Calu3 (cell line): ENCODE measurements at regions of chr2 and their contacts with region 1.

Region 1: GRCh38 chr2:160752496-160753330 is 259.1 kb upstream of the RBMS1 start:
- DNase-seq: peak; percentile 70
- H3K4me3 Mint-ChIP-seq: peak overlapping the region; percentile 22
- H3K27ac Mint-ChIP-seq: peak overlapping the region; percentile 82
- H3K4me1 Mint-ChIP-seq: peaks cover 50% of the 10 kb centered on the region
- H3K27me3 Mint-ChIP-seq: no peaks in the 10 kb centered on the region
- CTCF ChIP-seq: no peak

Region 2: GRCh38 chr2:160429248-160430000 is 323.3 kb before region 1 on chr2:
- CTCF ChIA-PET with region 1: interaction called, 4 read pairs
- intact Hi-C with region 1: loop called (anchors 2 kb)
- DNase-seq: no peak
- H3K4me3 Mint-ChIP-seq: no peak overlapping the region
- H3K27ac Mint-ChIP-seq: peak overlapping the region; percentile 26
- H3K4me1 Mint-ChIP-seq: peaks cover 33% of the 10 kb centered on the region
- H3K27me3 Mint-ChIP-seq: no peaks in the 10 kb centered on the region
- CTCF ChIP-seq: peak; percentile 39

Region 3: GRCh38 chr2:160666154-160667060 is 86.3 kb before region 1 on chr2:
- CTCF ChIA-PET with region 1: no interaction called
- intact Hi-C with region 1: loop called (anchors 2 kb)
- DNase-seq: peak; percentile 44
- H3K4me3 Mint-ChIP-seq: peak overlapping the region; percentile 51
- H3K27ac Mint-ChIP-seq: peak overlapping the region; percentile 40
- H3K4me1 Mint-ChIP-seq: peaks cover 38% of the 10 kb centered on the region
- H3K27me3 Mint-ChIP-seq: no peaks in the 10 kb centered on the region
- CTCF ChIP-seq: no peak

Region 4: GRCh38 chr2:160803881-160804280 is 51.2 kb after region 1 on chr2:
- CTCF ChIA-PET with region 1: no interaction called
- intact Hi-C with region 1: no loop called
- DNase-seq: no peak
- H3K4me3 Mint-ChIP-seq: no peak overlapping the region
- H3K27ac Mint-ChIP-seq: no peak overlapping the region
- H3K4me1 Mint-ChIP-seq: no peaks in the 10 kb centered on the region
- H3K27me3 Mint-ChIP-seq: no peaks in the 10 kb centered on the region
- CTCF ChIP-seq: no peak

Region 5: GRCh38 chr2:160878618-160879017 is 125.9 kb after region 1 on chr2:
- CTCF ChIA-PET with region 1: no interaction called
- intact Hi-C with region 1: no loop called
- DNase-seq: no peak
- H3K4me3 Mint-ChIP-seq: no peak overlapping the region
- H3K27ac Mint-ChIP-seq: no peak overlapping the region
- H3K4me1 Mint-ChIP-seq: peaks cover 8% of the 10 kb centered on the region
- H3K27me3 Mint-ChIP-seq: no peaks in the 10 kb centered on the region
- CTCF ChIP-seq: no peak

Region 6: DNA sequence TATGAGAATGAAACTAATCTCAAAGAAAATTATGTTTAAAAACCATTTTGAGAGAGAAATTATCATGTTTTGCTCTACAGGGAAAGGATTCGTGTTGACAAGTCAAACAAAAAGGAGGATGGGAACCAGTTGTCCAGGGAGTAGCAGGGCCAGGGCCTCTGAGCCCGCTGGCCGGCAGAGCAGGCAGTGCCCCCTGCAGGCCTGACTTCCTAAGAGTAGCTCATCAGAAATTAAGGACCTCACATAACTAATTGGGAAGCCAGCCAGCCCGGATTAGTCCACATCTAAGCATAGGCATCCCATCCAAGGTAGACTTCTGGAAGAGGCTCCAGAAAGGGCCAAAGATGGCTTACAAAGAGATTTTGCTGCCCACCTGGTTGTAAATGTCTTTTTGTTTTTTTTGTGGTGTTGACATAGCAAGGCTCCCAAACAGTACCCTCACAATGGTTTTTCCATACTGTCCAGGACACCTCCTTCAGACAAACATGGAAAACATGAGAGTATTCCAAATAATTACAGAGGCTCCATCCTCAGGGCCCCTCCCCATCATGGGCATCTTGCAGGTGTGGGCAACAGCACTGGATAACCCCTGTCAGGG is 166.3 kb after region 1 on chr2:
- CTCF ChIA-PET with region 1: no interaction called
- intact Hi-C with region 1: loop called (anchors 5 kb)
- DNase-seq: peak; percentile 80
- H3K4me3 Mint-ChIP-seq: no peak overlapping the region
- H3K27ac Mint-ChIP-seq: peak overlapping the region; percentile 64
- H3K4me1 Mint-ChIP-seq: no peaks in the 10 kb centered on the region
- H3K27me3 Mint-ChIP-seq: no peaks in the 10 kb centered on the region
- CTCF ChIP-seq: peak; percentile 77